AG04449 (cell line): ENCODE measurements at regions of chr12 and their contacts with region 1.

Region 1: DNA sequence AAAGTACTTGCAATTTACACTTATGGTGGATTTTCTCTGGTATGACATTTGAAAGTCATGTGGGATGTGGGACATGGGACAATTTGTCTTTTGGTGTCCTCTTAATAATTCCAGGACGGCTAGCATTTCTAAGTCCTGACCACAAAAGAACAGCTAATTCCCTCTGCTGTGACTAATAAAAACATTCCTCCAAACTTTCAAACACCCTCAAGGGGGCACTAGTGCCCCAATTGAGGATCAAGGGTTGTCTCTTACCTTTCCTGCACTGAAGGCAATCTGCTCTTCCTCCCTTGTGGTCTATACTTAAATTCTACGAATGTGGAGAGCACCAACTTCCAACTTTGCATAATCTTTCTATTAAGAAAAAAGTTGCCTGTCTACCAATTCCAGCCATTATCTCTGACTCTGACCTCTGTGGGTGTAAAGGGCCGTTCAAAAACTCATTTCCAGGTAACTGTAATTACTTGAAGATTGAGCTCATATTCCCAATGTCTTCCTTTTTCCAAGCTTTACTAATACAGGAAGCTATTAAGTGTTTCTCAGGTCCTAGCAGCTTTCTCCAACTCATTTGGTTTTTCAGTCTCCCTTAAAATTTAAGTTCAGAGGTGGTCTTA is 210.2 kb downstream of the PTPRO start:
- DNase-seq: no peak
- H3K4me3 ChIP-seq: no peak overlapping the region
- CTCF ChIP-seq: peak; percentile 45

Region 2: GRCh38 chr12:15546102-15546701 is 13.7 kb after region 1 on chr12:
- CTCF ChIA-PET with region 1: interaction called, 25 read pairs
- POLR2A ChIA-PET with region 1: no interaction called
- DNase-seq: no peak
- H3K4me3 ChIP-seq: no peak overlapping the region
- CTCF ChIP-seq: no peak

Region 3: DNA sequence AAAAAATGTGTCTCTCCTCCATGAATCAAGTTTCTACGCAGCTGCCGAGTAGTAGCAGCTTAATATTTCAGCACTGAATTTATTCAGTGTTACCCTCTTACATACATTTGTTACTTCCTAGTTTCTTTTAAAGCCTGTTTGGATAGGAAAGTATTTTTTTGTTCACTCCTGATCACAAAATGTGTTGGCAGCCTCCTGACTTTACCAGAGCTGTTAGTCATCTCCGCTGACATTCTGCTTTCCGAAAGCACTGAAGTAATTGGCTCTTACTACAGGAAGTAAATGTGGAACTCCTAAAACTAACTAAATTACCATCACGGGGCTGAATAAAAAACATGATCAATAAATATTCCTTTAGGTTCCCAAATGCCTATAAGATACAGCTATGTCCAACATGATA is 31.2 kb after region 1 on chr12:
- CTCF ChIA-PET with region 1: interaction called, 22 read pairs
- POLR2A ChIA-PET with region 1: no interaction called
- DNase-seq: no peak
- H3K4me3 ChIP-seq: no peak overlapping the region
- CTCF ChIP-seq: no peak

Region 4: GRCh38 chr12:15584366-15585041 is 52.0 kb after region 1 on chr12:
- CTCF ChIA-PET with region 1: interaction called, 542 read pairs
- POLR2A ChIA-PET with region 1: no interaction called
- DNase-seq: peak; percentile 60
- H3K4me3 ChIP-seq: no peak overlapping the region
- CTCF ChIP-seq: peak; percentile 61

Region 5: DNA sequence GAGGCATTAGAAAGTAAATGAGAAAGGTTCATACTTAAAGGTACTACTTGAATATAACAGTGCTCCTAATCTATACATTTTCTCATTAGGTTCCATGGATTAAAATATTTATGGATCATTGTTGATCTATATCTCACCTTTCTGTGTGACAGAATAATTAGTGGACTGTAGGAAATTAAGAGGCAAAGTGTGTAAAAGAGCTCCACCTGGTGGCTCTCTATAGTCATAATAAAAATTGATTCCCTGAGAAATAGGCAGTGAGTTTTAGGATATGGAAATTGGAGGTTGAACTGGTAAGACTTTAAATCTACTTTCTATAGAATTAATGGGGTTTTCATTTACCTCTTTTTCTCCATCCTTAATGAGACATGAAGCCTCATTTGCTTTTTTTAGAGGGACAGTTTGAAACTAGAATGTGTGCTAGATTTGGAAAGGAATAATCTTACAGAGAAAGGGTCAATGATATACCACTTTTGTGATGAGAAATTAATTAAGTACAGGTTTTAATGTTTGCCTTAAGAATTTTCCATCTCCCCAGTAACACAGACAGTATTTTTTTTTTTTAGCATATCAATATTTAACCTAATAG is 366.9 kb after region 1 on chr12:
- CTCF ChIA-PET with region 1: interaction called, 11 read pairs
- POLR2A ChIA-PET with region 1: no interaction called
- DNase-seq: no peak
- H3K4me3 ChIP-seq: no peak overlapping the region
- CTCF ChIP-seq: peak; percentile 33